ENCODE measurements at regions of chr7 and their contacts with region 1.

Region 1: DNA sequence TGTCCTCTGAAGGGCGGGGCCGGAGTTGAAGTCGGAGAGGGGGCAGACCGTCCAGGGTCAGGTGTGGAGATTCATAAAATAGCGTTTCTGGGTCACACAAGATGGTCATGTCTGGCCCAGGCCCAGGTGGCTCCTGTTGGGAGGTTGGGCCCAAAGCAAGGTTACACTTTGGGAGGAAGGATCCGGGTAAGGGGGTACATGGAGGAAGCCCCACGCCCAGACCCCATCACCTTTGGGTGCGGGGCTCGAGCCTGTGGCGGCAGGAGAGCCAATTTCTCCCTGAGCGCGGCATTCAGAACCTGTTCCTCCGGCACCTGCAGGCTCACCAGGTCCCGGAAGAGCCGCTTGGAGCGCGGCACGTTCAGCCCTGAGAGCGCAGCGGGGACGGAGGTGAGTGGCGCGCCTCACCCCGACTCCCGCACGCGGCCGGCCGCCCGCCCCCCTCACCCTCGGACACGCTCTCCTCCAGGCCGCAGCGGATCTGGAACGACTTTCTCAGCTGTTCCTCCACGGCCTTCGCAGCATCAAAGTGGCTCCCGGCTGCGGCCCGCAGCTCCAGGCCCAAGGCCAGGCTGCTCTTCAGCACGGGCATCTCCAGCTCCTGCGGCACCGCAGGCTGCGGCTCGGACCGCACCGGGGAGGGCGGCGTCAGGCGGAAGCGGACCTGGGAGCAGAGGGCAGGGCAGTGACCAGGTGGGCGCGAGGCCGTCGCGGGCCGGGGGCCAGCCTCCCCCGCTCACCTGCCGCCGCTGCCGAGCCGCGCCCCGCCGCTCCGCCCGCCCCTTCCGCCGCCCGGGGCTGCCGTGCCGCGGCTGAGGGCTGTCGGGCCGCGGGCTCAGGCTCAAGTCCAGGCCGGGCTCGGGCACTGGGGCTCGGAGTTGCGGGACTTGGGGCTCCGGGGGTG is 644 bp downstream of the PPP1R35 start:
- DNase-seq: peak; percentile 48
- ATAC-seq: peak; percentile 23
- H3K4me3 Mint-ChIP-seq: peak overlapping the region; percentile 91
- H3K27ac Mint-ChIP-seq: peak overlapping the region; percentile 86
- H3K4me1 Mint-ChIP-seq: peaks cover 54% of the 10 kb centered on the region
- H3K27me3 Mint-ChIP-seq: no peaks in the 10 kb centered on the region
- CTCF ChIP-seq: no peak

Region 2: DNA sequence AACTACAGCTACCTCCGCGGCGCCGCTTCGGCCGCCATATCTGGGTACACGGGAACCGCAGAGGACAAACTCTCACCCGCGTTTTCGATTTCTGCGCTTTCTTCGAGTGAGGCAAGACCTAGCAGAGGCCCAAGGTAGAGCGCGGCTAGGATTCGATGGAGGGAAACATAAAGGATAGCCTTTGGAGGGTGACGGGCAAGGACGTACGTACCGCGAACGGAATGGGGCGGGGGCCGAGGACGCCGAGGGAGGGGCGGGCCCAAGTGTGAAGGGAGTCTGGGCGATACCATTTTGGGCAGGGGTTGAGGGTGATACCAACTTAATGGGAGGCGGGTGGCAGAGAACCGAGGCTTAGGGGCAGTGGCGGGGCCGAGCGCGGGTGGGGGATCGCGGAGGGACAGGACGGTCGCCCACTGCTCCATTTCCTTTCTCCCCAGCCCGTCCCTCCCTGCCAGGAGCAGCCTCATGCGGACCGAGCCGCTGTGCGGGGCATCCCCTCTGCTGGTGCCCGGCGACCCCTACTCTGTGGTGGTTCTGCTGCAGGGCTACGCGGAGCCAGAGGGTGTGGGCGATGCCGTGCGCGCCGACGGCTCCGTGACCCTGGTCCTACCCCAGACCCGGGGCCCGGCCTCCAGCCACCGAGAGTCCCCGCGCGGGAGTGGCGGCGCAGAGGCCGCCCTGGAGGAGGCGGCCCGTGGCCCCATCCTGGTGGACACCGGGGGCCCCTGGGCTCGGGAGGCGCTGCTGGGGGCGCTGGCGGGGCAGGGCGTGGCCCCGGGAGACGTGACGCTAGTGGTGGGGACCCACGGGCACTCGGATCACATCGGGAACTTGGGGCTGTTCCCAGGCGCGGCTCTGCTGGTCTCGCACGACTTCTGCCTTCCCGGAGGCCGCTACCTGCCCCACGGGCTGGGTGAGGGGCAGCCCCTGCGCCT is 308.5 kb before region 1 on chr7 and contains the start of gene MBLAC1:
- CTCF ChIA-PET with region 1: interaction called, 4 read pairs
- POLR2A ChIA-PET with region 1: interaction called, 3 read pairs
- intact Hi-C with region 1: loop called (anchors 1 kb)
- DNase-seq: peak; percentile 81
- ATAC-seq: peak; percentile 85
- H3K4me3 Mint-ChIP-seq: peak within 1 kb of the TSS; percentile 100
- H3K27ac Mint-ChIP-seq: peak within 1 kb of the TSS; percentile 100
- H3K4me1 Mint-ChIP-seq: peaks cover 41% of the 10 kb centered on the region
- H3K27me3 Mint-ChIP-seq: no peaks in the 10 kb centered on the region
- CTCF ChIP-seq: no peak
- total RNA-seq, gene MBLAC1: 1.9 and 2.2 TPM in 2 replicates

Region 3: GRCh38 chr7:100271716-100272537 is 163.7 kb before region 1 on chr7:
- CTCF ChIA-PET with region 1: no interaction called
- POLR2A ChIA-PET with region 1: no interaction called
- intact Hi-C with region 1: no loop called
- DNase-seq: peak; percentile 96
- ATAC-seq: peak; percentile 91
- H3K4me3 Mint-ChIP-seq: peak overlapping the region; percentile 79
- H3K27ac Mint-ChIP-seq: peak overlapping the region; percentile 50
- H3K4me1 Mint-ChIP-seq: peaks cover 28% of the 10 kb centered on the region
- H3K27me3 Mint-ChIP-seq: no peaks in the 10 kb centered on the region
- CTCF ChIP-seq: no peak

Region 4: GRCh38 chr7:100478966-100479665 is 43.5 kb after region 1 on chr7 and contains the start of gene TSC22D4:
- CTCF ChIA-PET with region 1: no interaction called
- POLR2A ChIA-PET with region 1: interaction called, 38 read pairs
- intact Hi-C with region 1: loop called (anchors 2 kb)
- DNase-seq: peak; percentile 81
- ATAC-seq: peak; percentile 73
- H3K4me3 Mint-ChIP-seq: peak within 1 kb of the TSS; percentile 93
- H3K27ac Mint-ChIP-seq: peak within 1 kb of the TSS; percentile 86
- H3K4me1 Mint-ChIP-seq: peaks cover 41% of the 10 kb centered on the region
- H3K27me3 Mint-ChIP-seq: no peaks in the 10 kb centered on the region
- CTCF ChIP-seq: no peak
- total RNA-seq, gene TSC22D4: 60.2 and 68.7 TPM in 2 replicates

Region 5: GRCh38 chr7:100538654-100539435 is 103.2 kb after region 1 on chr7 and contains the start of gene AGFG2:
- CTCF ChIA-PET with region 1: no interaction called
- POLR2A ChIA-PET with region 1: interaction called, 3 read pairs
- intact Hi-C with region 1: loop called (anchors 1 kb)
- DNase-seq: peak; percentile 97
- ATAC-seq: peak; percentile 98
- H3K4me3 Mint-ChIP-seq: peak within 1 kb of the TSS; percentile 100
- H3K27ac Mint-ChIP-seq: peak within 1 kb of the TSS; percentile 87
- H3K4me1 Mint-ChIP-seq: peaks cover 32% of the 10 kb centered on the region
- H3K27me3 Mint-ChIP-seq: no peaks in the 10 kb centered on the region
- CTCF ChIP-seq: no peak
- total RNA-seq, gene AGFG2: 9.5 and 10.8 TPM in 2 replicates